ENCODE measurements at regions of chrX and their contacts with region 1.

Region 1: DNA sequence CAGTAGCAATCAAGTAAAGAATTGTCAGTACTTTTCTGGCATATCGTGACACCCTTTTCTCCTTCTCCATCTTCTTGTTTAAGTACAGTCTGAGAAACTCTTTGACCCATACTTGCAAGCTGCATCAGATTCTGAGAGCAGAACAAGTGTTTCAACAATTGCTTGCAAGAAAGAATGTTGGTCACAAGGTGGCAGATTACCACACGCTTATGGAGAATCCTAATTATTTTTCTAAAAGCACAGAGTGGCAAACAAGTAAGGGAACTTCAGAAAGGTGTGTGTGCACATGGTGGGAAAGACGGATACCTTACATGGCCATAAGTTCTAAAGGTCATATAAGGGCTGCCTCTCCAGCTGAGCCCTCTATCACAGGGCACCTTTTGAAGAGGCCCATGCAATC is 136.4 kb upstream of the FGF13 start:
- DNase-seq: peak; percentile 55
- H3K4me3 ChIP-seq: no peak overlapping the region
- H3K27ac ChIP-seq: no peak overlapping the region
- H3K4me1 ChIP-seq: peaks cover 43% of the 10 kb centered on the region
- H3K27me3 ChIP-seq: no peaks in the 10 kb centered on the region
- CTCF ChIP-seq: peak; percentile 58

Region 2: DNA sequence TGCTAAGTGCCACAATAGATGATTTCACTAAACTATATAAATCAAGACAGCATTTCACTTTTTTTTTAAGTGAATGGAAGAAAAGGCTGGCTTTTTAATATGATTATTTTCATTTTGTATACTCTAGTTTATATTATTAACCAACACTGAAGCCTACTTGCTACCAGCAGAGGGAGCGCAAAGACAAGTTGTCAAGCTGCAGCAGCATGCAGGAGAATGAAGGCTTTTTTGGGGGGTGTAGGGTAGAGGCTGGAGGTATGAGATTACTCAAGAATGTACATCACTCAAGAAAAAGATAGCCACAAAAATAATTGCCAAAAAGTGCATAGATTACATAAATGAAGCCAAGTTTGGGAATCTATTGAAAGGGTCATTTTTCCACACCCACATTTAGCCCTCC is 655.9 kb before region 1 on chrX:
- CTCF ChIA-PET with region 1: no interaction called
- POLR2A ChIA-PET with region 1: no interaction called
- intact Hi-C with region 1: loop called (anchors 10 kb)
- DNase-seq: peak; percentile 70
- H3K4me3 ChIP-seq: no peak overlapping the region
- H3K27ac ChIP-seq: no peak overlapping the region
- H3K4me1 ChIP-seq: no peaks in the 10 kb centered on the region
- H3K27me3 ChIP-seq: no peaks in the 10 kb centered on the region
- CTCF ChIP-seq: peak; percentile 72

Region 3: GRCh38 chrX:138917781-138918180 is 69.9 kb after region 1 on chrX:
- CTCF ChIA-PET with region 1: no interaction called
- POLR2A ChIA-PET with region 1: no interaction called
- intact Hi-C with region 1: no loop called
- DNase-seq: peak; percentile 44
- H3K4me3 ChIP-seq: no peak overlapping the region
- H3K27ac ChIP-seq: no peak overlapping the region
- H3K4me1 ChIP-seq: peaks cover 18% of the 10 kb centered on the region
- H3K27me3 ChIP-seq: no peaks in the 10 kb centered on the region
- CTCF ChIP-seq: no peak

Region 4: DNA sequence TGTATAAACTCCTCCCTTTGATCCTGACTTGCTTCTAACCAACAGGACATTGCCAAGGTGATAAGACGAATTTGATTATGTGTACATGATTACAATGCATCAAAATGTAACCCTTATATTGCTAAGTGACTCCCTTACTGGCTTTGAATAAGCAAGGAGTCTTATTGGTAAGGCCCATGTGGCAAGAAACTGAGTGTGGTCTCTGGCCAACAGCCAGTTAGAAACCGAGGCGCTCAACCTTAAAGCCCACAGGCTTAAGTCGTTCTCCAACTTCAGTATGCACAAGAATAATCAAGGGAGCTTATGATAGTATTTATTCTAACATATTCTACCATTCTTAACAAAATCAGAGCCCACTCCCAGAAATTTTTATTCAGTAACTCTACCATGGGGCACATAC is 308.4 kb after region 1 on chrX:
- CTCF ChIA-PET with region 1: no interaction called
- POLR2A ChIA-PET with region 1: no interaction called
- intact Hi-C with region 1: no loop called
- DNase-seq: no peak
- H3K4me3 ChIP-seq: no peak overlapping the region
- H3K27ac ChIP-seq: no peak overlapping the region
- H3K4me1 ChIP-seq: no peaks in the 10 kb centered on the region
- H3K27me3 ChIP-seq: no peaks in the 10 kb centered on the region
- CTCF ChIP-seq: no peak

Region 5: GRCh38 chrX:139454756-139455155 is 606.8 kb after region 1 on chrX:
- CTCF ChIA-PET with region 1: no interaction called
- POLR2A ChIA-PET with region 1: no interaction called
- intact Hi-C with region 1: loop called (anchors 10 kb)
- DNase-seq: no peak
- H3K4me3 ChIP-seq: no peak overlapping the region
- H3K27ac ChIP-seq: no peak overlapping the region
- H3K4me1 ChIP-seq: no peaks in the 10 kb centered on the region
- H3K27me3 ChIP-seq: no peaks in the 10 kb centered on the region
- CTCF ChIP-seq: no peak

Region 6: GRCh38 chrX:139554376-139554775 is 706.4 kb after region 1 on chrX:
- CTCF ChIA-PET with region 1: no interaction called
- POLR2A ChIA-PET with region 1: no interaction called
- intact Hi-C with region 1: loop called (anchors 5 kb)
- DNase-seq: peak; percentile 77
- H3K4me3 ChIP-seq: no peak overlapping the region
- H3K27ac ChIP-seq: peak overlapping the region; percentile 79
- H3K4me1 ChIP-seq: peaks cover 31% of the 10 kb centered on the region
- H3K27me3 ChIP-seq: no peaks in the 10 kb centered on the region
- CTCF ChIP-seq: no peak